Activated CD4-positive, alpha-beta T cell treated with anti-CD3 and anti-CD28 coated beads, Interleukin-2, amount 10 ng/mL, durations not matched to agents 24 days and 14 days (primary cell): ENCODE measurements at regions of chr3 and their contacts with region 1.

Region 1: GRCh38 chr3:52339612-52340011 is 23.5 kb downstream of the DNAH1 start:
- DNase-seq: peak; percentile 87
- H3K4me3 Mint-ChIP-seq: no peak overlapping the region
- H3K27ac Mint-ChIP-seq: no peak overlapping the region
- H3K4me1 Mint-ChIP-seq: peaks cover 9% of the 10 kb centered on the region
- H3K27me3 Mint-ChIP-seq: no peaks in the 10 kb centered on the region

Region 2: GRCh38 chr3:52220380-52221026 is 119.1 kb before region 1 on chr3:
- intact Hi-C with region 1: loop called (anchors 1 kb)
- DNase-seq: peak; percentile 96
- H3K4me3 Mint-ChIP-seq: peak overlapping the region; percentile 37
- H3K27ac Mint-ChIP-seq: no peak overlapping the region
- H3K4me1 Mint-ChIP-seq: peaks cover 66% of the 10 kb centered on the region
- H3K27me3 Mint-ChIP-seq: no peaks in the 10 kb centered on the region

Region 3: GRCh38 chr3:52231502-52232293 is 107.9 kb before region 1 on chr3:
- intact Hi-C with region 1: loop called (anchors 1 kb)
- DNase-seq: peak; percentile 96
- H3K4me3 Mint-ChIP-seq: peak overlapping the region; percentile 45
- H3K27ac Mint-ChIP-seq: peak overlapping the region; percentile 80
- H3K4me1 Mint-ChIP-seq: peaks cover 38% of the 10 kb centered on the region
- H3K27me3 Mint-ChIP-seq: no peaks in the 10 kb centered on the region

Region 4: GRCh38 chr3:52291508-52292181 is 48.0 kb before region 1 on chr3:
- intact Hi-C with region 1: loop called (anchors 1 kb)
- DNase-seq: peak; percentile 82
- H3K4me3 Mint-ChIP-seq: no peak overlapping the region
- H3K27ac Mint-ChIP-seq: no peak overlapping the region
- H3K4me1 Mint-ChIP-seq: peaks cover 20% of the 10 kb centered on the region
- H3K27me3 Mint-ChIP-seq: no peaks in the 10 kb centered on the region